ENCODE measurements at regions of chr2 and their contacts with region 1.

Region 1: GRCh38 chr2:53880756-53881155 is 21.0 kb upstream of the GPR75 start:
- DNase-seq: no peak
- ATAC-seq: no peak

Region 2: GRCh38 chr2:53813151-53813550 is 67.6 kb before region 1 on chr2:
- intact Hi-C with region 1: loop called in 1 of 2 experiments (anchors 10 kb)
- DNase-seq: no peak
- ATAC-seq: peak; percentile 97

Region 3: DNA sequence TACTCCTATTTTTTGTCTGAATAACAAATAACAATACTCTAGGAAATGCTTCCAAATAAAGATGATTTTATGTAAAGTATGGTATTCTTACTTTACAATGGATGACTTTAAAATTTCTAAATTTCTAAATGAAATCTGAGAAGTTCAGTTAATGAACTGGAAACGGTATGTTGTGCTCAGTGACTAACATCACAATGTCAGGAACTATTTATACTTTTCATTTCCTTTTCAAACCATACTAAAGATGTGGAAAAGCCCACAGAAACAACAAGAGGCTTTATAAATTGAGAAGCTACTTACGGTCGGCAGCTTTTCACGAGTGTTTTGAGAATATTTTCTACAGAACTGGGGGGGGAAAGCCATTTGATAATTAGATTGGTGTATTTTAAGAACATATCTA is 58.9 kb after region 1 on chr2:
- intact Hi-C with region 1: loop called in 1 of 2 experiments (anchors 10 kb)
- DNase-seq: no peak
- ATAC-seq: no peak

Region 4: DNA sequence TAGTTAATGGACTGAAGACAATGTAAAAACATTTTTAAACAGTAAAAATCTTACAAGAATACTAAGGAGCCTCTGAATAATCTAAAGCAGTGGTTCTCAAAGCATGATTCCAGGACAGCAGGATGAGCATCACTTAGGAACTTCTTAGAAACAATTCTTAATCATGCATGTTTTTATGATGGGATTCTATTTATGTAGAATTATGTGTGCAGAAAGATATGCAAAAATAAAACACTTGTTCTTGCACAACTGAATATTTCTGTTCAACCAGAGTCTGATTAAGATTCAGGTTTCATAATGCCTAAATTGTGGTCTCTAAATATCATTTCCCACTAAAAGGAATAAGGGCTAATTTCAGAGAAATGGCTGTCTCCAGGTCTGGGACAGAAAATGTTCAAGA is 1457.5 kb after region 1 on chr2:
- intact Hi-C with region 1: no loop called
- DNase-seq: no peak
- ATAC-seq: no peak